ENCODE measurements at regions of chr5 and their contacts with region 1.

Region 1: DNA sequence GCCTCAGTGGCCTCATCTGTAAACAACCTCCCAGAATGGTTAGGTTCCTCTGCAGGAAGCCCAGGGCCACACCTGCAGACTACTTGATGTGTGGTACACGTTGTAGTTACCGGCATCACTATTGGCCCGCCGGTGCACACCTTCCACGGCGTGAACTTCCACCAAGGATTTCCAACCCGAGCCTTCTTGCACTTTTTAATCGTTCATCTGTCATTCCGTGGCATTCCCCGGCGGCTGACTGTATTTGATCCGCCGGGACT is 5.3 kb upstream of the TRIM41 start:
- DNase-seq: no peak
- ATAC-seq: no peak; the same call in 1 of the 2 replicates
- H3K4me3 ChIP-seq: peak overlapping the region; percentile 66
- H3K27ac ChIP-seq: no peak overlapping the region
- H3K4me1 ChIP-seq: peaks cover 9% of the 10 kb centered on the region
- H3K27me3 ChIP-seq: no peaks in the 10 kb centered on the region
- CTCF ChIP-seq: no peak

Region 2: GRCh38 chr5:180848878-180849277 is 368.9 kb before region 1 on chr5:
- CTCF ChIA-PET with region 1: no interaction called
- POLR2A ChIA-PET with region 1: no interaction called
- intact Hi-C with region 1: no loop called
- DNase-seq: no peak
- ATAC-seq: no peak
- H3K4me3 ChIP-seq: no peak overlapping the region
- H3K27ac ChIP-seq: no peak overlapping the region
- H3K4me1 ChIP-seq: peaks cover 7% of the 10 kb centered on the region
- H3K27me3 ChIP-seq: no peaks in the 10 kb centered on the region
- CTCF ChIP-seq: peak; percentile 31

Region 3: GRCh38 chr5:181191529-181192394 is 26.0 kb before region 1 on chr5:
- CTCF ChIA-PET with region 1: no interaction called
- POLR2A ChIA-PET with region 1: no interaction called
- intact Hi-C with region 1: loop called (anchors 1 kb)
- DNase-seq: peak; percentile 96
- ATAC-seq: peak; percentile 55
- H3K4me3 ChIP-seq: peak overlapping the region; percentile 89
- H3K27ac ChIP-seq: peak overlapping the region; percentile 64
- H3K4me1 ChIP-seq: peaks cover 13% of the 10 kb centered on the region
- H3K27me3 ChIP-seq: no peaks in the 10 kb centered on the region
- CTCF ChIP-seq: no peak

Region 4: DNA sequence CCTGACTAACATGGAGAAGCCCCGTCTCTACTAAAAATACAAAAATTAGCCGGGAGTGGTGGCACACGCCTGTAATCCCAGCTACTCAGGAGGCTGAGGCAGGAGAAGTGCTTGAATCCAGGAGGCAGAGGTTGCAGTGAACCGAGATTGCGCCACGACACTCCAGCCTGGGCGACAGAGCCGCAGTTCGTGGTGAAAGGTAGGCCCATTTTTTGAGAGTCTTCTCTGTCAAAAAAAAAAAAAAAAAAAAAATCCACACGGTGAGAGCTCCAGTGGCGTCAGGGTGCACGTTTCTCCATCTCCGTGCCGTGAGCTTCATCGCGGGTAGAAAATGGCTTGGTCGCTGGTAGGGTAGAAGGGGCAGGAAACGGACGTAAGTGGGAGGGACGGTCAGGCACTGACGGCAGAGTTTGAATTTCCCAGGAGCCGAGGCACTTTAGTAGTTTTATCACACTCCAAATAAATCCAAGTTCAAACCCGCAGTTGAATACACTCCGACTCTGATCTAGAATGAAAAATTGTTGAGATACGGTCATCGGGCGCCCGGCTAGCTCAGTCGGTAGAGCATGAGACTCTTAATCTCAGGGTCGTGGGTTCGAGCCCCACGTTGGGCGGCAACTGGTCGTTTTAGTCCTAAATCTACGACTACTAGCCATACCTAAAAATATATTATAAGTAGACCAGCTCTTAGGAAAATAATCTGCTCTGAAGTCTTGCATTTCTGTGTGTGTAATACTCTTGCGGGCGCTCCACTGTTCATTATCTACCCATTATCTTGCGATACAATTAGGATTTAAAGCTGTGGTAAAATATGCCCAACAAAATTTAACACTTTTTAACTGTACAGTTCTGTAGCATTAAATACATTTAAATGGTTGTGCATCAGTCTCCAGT is 10.3 kb before region 1 on chr5:
- CTCF ChIA-PET with region 1: no interaction called
- POLR2A ChIA-PET with region 1: no interaction called
- intact Hi-C with region 1: loop called (anchors 1 kb)
- DNase-seq: peak; percentile 96
- ATAC-seq: peak; percentile 51
- H3K4me3 ChIP-seq: peak overlapping the region; percentile 85
- H3K27ac ChIP-seq: peak overlapping the region; percentile 69
- H3K4me1 ChIP-seq: peaks cover 18% of the 10 kb centered on the region
- H3K27me3 ChIP-seq: no peaks in the 10 kb centered on the region
- CTCF ChIP-seq: no peak